ENCODE measurements at regions of chr12 and their contacts with region 1.

Region 1: GRCh38 chr12:57899010-57899662 is 42.2 kb upstream of the ATP23 start:
- DNase-seq: peak in 1 of 2 experiments; percentile 38
- H3K4me3 ChIP-seq: no peak overlapping the region
- H3K27ac ChIP-seq: no peak overlapping the region
- H3K4me1 ChIP-seq: peaks cover 34% of the 10 kb centered on the region
- H3K27me3 ChIP-seq: no peaks in the 10 kb centered on the region
- CTCF ChIP-seq: no peak

Region 2: DNA sequence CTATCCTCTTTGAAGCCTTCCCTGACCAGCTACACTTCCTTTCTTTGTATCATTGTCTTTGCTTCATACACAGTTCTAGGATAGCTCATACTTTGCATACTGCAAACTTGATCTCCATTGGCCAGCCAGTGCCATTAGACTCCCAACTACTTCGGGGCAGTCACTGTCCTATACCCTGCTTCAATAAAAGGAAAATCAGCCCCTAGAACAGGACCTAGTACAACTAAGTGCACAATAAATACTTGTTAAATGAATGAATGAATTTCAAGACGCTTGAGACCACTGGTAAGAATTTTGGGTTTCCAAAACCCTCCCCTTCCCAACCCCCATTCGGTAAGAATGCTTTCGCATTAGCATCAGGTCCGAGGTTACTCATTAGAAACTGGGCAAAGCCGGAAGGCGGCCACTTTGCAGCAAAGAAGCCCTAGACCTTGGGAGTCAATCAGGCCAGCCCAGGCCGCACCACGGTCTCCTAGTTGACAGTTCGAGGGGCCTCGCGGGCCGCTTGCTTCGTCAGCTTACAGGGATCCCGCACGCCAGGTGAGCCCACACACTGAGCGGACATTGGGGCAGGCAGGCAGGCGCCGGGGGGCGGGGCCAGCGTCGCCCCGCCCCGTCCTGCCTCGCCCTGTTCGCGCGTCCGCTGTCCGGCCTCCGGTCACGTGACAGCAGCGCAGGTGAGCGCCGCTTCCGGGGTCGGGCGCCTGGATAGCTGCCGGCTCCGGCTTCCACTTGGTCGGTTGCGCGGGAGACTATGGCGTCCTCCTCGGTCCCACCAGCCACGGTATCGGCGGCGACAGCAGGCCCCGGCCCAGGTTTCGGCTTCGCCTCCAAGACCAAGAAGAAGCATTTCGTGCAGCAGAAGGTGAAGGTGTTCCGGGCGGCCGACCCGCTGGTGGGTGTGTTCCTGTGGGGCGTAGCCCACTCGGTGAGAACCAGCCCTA is 308.3 kb before region 1 on chr12 and contains the start of gene PIP4K2C:
- CTCF ChIA-PET with region 1: no interaction called
- POLR2A ChIA-PET with region 1: no interaction called
- intact Hi-C with region 1: no loop called
- DNase-seq: peak; percentile 76 to 86
- H3K4me3 ChIP-seq: peak within 1 kb of the TSS; percentile 97
- H3K27ac ChIP-seq: no peak within 1 kb of the TSS
- H3K4me1 ChIP-seq: peaks cover 15% of the 10 kb centered on the region
- H3K27me3 ChIP-seq: peaks cover 16% of the 10 kb centered on the region
- CTCF ChIP-seq: no peak
- total RNA-seq, gene PIP4K2C: 47.7 and 48.7 TPM in 2 replicates

Region 3: GRCh38 chr12:57621497-57622292 is 277.4 kb before region 1 on chr12:
- CTCF ChIA-PET with region 1: no interaction called
- POLR2A ChIA-PET with region 1: no interaction called
- intact Hi-C with region 1: no loop called
- DNase-seq: peak in 1 of 2 experiments; percentile 37
- H3K4me3 ChIP-seq: no peak overlapping the region
- H3K27ac ChIP-seq: no peak overlapping the region
- H3K4me1 ChIP-seq: no peaks in the 10 kb centered on the region
- H3K27me3 ChIP-seq: peaks cover 74% of the 10 kb centered on the region
- CTCF ChIP-seq: peak; percentile 79

Region 4: GRCh38 chr12:57830393-57830792 is 68.7 kb before region 1 on chr12:
- CTCF ChIA-PET with region 1: interaction called, 4 read pairs
- POLR2A ChIA-PET with region 1: no interaction called
- intact Hi-C with region 1: loop called (anchors 2 kb)
- DNase-seq: no peak
- H3K4me3 ChIP-seq: no peak overlapping the region
- H3K27ac ChIP-seq: no peak overlapping the region
- H3K4me1 ChIP-seq: no peaks in the 10 kb centered on the region
- H3K27me3 ChIP-seq: no peaks in the 10 kb centered on the region
- CTCF ChIP-seq: no peak

Region 5: GRCh38 chr12:57941165-57941894 is 42.2 kb after region 1 on chr12 and contains the start of gene ATP23:
- CTCF ChIA-PET with region 1: no interaction called
- POLR2A ChIA-PET with region 1: interaction called, 17 read pairs
- intact Hi-C with region 1: no loop called
- DNase-seq: peak; percentile 86 to 96
- H3K4me3 ChIP-seq: peak within 1 kb of the TSS; percentile 68
- H3K27ac ChIP-seq: peak within 1 kb of the TSS; percentile 62
- H3K4me1 ChIP-seq: peaks cover 22% of the 10 kb centered on the region; the same call in 1 of the 2 replicates
- H3K27me3 ChIP-seq: no peaks in the 10 kb centered on the region
- CTCF ChIP-seq: no peak
- total RNA-seq, gene ATP23: 5.1 and 6.5 TPM in 2 replicates